ENCODE measurements at regions of chr1 and their contacts with region 1.

Region 1: DNA sequence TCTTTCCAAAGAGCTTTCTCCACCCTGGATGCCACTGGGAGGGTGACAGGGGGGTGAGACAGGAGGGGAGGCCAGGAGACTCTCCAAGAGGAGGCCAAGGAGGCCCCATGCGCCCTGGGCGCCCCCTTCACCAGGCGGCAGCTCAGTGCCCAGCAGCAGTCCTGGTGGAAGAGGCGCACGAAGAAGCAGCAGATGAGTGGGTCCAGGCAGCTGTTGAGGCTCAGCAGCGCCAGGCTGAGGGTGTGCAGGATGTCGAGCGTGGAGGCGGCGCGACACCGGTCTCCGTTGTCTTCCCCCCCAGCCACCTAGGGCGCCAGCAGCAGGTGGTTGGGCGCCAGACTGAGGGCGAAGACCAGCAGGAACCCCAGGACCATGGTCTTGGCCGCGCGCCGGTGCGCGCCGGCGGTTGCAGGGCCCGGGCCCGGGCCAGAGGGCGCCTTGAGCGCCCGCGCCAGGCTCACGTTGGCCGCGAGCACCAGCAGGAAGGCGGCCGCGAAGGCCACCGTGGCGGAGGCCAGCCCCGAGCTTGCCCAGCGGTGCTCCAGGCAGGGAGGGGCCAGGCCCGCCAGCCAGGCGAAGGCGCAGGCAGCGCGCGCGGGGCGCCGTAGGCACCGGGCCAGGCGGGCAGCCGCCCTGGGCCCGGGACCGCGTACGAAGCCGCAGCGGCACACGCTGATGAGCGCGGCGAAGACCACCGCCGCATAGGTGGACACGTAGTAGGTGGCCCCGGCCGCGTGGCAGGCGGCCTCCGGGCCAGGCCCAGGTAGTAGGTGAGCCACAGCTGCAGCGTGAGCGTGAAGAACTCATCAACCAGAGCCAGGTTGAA is 8.6 kb downstream of the TMEM35B start:
- DNase-seq: no peak
- H3K4me3 ChIP-seq: no peak overlapping the region
- H3K27ac ChIP-seq: no peak overlapping the region
- H3K4me1 ChIP-seq: no peaks in the 10 kb centered on the region
- H3K27me3 ChIP-seq: no peaks in the 10 kb centered on the region
- CTCF ChIP-seq: no peak

Region 2: DNA sequence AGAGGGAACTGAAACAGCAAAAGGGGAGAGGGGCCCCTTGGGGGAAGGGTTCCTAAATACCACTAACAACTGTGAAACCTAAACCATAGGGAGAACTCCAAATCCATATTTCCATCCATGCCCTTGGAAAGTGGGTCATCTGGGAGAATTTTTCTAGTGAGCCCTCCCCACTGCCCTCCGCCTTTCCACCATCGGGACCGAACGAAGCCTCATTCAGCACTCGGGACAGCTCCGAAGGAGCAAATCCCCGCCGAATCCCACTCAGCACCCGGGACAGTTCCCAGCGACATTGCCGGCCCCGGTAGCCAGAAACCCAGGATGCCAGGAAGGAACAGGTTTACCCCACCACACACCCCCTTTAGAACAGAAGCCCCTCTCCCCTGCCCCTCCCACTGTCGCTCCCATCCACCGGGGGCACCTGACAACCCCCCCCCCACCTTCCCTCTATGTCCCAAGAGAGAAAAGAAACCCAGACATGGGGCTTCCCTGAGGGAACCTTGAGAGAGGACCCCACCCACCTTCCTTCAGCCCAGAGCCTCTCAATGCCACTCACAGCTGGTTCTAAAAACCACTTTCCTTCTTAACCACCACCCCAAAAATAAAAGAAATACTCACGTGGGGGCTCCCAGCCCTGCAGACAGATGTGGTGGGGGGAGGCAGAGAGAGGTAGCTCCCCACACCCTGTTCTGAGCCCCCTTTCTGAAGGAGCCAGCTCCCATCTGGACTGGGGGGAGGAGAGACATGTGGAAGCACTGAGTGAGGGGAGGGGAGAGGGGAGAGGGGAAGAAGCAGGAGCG is 51.6 kb before region 1 on chr1:
- CTCF ChIA-PET with region 1: no interaction called
- dilution Hi-C with region 1: no loop called
- in situ Hi-C with region 1: no loop called
- intact Hi-C with region 1: no loop called
- DNase-seq: peak; percentile 45
- H3K4me3 ChIP-seq: no peak overlapping the region
- H3K27ac ChIP-seq: no peak overlapping the region
- H3K4me1 ChIP-seq: peaks cover 11% of the 10 kb centered on the region
- H3K27me3 ChIP-seq: peaks cover 18% of the 10 kb centered on the region
- CTCF ChIP-seq: no peak

Region 3: DNA sequence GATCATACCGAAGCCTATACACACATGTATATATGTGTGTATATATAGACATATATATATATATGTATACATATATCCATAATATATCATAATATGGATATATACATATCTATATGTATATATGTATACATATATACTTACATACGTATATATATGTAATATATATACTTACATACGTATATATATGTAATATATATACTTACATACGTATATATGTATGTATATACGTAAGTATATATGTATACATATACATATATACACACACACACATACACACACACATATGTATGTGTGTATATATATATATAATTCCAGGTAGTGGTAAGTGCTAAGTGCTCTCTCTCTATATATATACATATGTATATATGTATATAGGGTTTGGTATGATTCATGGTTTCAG is 18.3 kb after region 1 on chr1:
- CTCF ChIA-PET with region 1: no interaction called
- dilution Hi-C with region 1: no loop called
- in situ Hi-C with region 1: no loop called
- intact Hi-C with region 1: no loop called
- DNase-seq: no peak
- H3K4me3 ChIP-seq: no peak overlapping the region
- H3K27ac ChIP-seq: no peak overlapping the region
- H3K4me1 ChIP-seq: no peaks in the 10 kb centered on the region
- H3K27me3 ChIP-seq: no peaks in the 10 kb centered on the region
- CTCF ChIP-seq: no peak

Region 4: DNA sequence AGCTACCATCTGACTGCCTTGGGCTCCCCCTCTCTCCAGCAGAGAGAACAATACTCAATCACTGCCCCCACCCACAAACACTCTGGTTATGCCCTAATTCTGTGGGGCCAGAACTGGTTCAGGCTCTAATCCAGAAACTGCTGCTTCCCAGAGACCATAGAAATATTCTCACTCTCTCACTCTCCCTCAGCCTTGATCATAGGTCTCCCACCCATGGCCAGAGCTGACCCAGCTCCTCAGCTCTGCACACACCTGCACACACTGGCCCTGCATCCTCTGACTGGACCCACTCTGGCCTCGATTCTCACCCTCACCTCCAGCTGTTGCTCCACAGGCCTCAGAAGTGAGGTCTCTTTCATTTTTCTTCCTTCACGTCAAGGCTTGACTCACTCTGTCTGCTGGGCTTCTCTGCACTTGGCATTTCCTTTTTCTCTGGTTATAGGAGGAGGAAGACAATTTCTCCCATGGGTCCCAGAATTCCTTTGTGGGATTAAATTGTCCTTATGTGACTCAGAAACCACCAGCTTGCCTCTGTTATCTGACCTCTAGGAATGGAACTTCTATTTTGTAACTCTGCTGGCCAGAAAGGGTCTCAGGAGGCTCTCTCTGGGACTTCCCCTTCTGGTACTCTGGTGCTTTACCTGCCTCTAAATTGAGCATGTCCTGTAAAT is 70.7 kb after region 1 on chr1:
- CTCF ChIA-PET with region 1: no interaction called
- dilution Hi-C with region 1: loop called (anchors 5 kb)
- in situ Hi-C with region 1: no loop called
- intact Hi-C with region 1: no loop called
- DNase-seq: peak; percentile 74
- H3K4me3 ChIP-seq: peak overlapping the region in 1 of 3 experiments; percentile 6
- H3K27ac ChIP-seq: peak overlapping the region; percentile 4
- H3K4me1 ChIP-seq: peaks cover 14% of the 10 kb centered on the region
- H3K27me3 ChIP-seq: no peaks in the 10 kb centered on the region
- CTCF ChIP-seq: no peak

Region 5: DNA sequence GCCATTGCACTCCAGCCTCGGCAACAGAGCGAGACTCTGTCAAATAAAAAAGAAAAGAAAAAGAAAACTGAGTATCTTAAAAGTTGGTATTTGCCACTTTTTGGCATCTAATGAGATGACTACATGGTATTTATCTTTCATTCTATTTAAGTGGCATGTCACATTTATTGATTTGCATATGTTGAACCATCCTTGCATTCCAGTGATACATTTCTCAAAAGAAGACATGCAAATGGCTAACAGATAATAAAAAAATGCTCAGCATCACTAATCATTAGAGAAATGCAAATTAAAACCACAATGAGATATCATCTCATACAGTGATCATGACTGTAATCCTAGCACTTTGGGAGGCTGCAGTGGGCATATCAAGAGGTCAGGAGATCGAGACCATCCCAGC is 188.3 kb after region 1 on chr1:
- CTCF ChIA-PET with region 1: no interaction called
- dilution Hi-C with region 1: no loop called
- in situ Hi-C with region 1: no loop called
- intact Hi-C with region 1: no loop called
- DNase-seq: no peak
- H3K4me3 ChIP-seq: no peak overlapping the region
- H3K27ac ChIP-seq: no peak overlapping the region
- H3K4me1 ChIP-seq: no peaks in the 10 kb centered on the region
- H3K27me3 ChIP-seq: no peaks in the 10 kb centered on the region
- CTCF ChIP-seq: no peak

Measured in mammary epithelial cell (primary cell).